ENCODE measurements at regions of chrX and their contacts with region 1.

Region 1: GRCh38 chrX:12946838-12947544 is 27.9 kb upstream of the TMSB4X start:
- DNase-seq: peak in 1 of 2 donors; percentile 34
- ATAC-seq: peak in 3 of 4 donors; percentile 49 to 63 (median 51)
- H3K4me3 ChIP-seq: no peak overlapping the region
- H3K27ac ChIP-seq: no peak overlapping the region
- H3K4me1 ChIP-seq: peaks cover 5% of the 10 kb centered on the region
- H3K27me3 ChIP-seq: no peaks in the 10 kb centered on the region
- CTCF ChIP-seq: peak; percentile 69

Region 2: DNA sequence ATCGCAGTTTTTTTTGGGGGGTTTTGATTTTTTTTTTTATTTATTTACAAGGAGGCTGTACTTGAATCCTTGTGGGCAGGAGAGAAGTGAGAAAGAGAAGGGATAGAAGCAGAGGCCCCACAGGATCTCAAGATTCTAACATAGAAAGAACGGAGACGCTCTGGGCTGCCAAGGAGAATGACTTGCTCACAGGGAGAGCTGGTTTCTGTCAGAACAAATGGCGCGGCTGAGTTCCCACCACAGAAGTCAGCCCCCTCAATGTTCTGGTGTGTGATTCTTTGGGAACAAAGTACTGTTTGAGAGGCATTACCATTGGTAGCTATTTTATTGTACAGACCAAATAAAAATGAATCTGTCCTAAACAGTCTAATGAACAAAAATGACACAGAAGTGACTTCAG is 292.3 kb after region 1 on chrX:
- intact Hi-C with region 1: no loop called
- DNase-seq: no peak
- ATAC-seq: no peak
- H3K4me3 ChIP-seq: no peak overlapping the region
- H3K27ac ChIP-seq: no peak overlapping the region
- H3K4me1 ChIP-seq: no peaks in the 10 kb centered on the region
- H3K27me3 ChIP-seq: peaks cover 0 to 7% (median 0%) of the 10 kb centered on the region in 3 donors
- CTCF ChIP-seq: no peak

Region 3: GRCh38 chrX:13473442-13474163 is 526.6 kb after region 1 on chrX:
- intact Hi-C with region 1: no loop called
- DNase-seq: no peak
- ATAC-seq: peak in 1 of 4 donors; percentile 36
- H3K4me3 ChIP-seq: no peak overlapping the region
- H3K27ac ChIP-seq: peak overlapping the region; percentile 51
- H3K4me1 ChIP-seq: no peaks in the 10 kb centered on the region
- H3K27me3 ChIP-seq: no peaks in the 10 kb centered on the region
- CTCF ChIP-seq: no peak

Region 4: DNA sequence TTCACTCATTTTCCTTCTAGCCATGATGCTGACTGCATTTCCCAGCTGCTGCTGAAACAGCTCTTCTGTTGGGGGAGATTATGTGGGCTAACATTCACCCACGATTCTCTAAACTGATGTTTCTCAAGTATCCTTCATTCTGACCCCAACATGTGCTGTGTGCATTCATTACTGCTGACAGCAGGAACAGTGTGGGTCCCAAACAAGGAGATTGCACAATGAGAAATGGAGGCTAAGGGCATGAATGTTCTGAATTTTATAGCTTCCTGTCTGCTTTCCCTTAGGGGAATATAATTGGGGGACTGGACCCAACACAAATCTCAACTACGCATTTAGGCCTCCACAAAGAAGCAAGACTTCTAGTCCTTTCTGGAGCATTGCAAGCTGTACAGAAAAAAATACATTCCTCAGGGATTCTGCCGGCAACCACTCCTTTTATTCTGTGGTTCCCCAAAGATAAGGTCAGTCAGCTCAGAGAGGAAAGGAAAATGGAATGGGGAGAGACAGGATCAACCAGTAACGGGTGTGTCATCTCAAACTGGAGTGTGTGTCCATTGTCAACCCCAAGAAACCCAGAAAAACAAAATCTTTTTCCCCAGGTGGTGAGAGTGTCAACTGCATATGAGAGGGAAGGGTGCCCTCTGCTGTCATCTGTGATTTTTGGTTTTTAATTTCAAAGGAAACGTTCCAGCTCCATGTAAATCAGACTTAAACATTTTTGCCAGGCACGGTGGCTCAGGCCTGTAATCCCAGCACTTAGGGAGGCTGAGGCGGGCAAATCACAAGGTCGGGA is 540.9 kb after region 1 on chrX:
- intact Hi-C with region 1: loop called (anchors 2 to 5 kb)
- DNase-seq: no peak
- ATAC-seq: peak; percentile 61 to 83 (median 66)
- H3K4me3 ChIP-seq: no peak overlapping the region
- H3K27ac ChIP-seq: peak overlapping the region; percentile 63
- H3K4me1 ChIP-seq: peaks cover 4% of the 10 kb centered on the region
- H3K27me3 ChIP-seq: peaks cover 0 to 21% (median 0%) of the 10 kb centered on the region in 3 donors
- CTCF ChIP-seq: peak; percentile 56